ENCODE measurements at regions of chr15 and their contacts with region 1.

Region 1: GRCh38 chr15:70892002-70892914 is at the starts of genes LRRC49 and THAP10:
- DNase-seq: peak; percentile 90
- H3K4me3 Mint-ChIP-seq: peak within 1 kb of the TSS; percentile 87
- H3K27ac Mint-ChIP-seq: peak within 1 kb of the TSS; percentile 53
- H3K4me1 Mint-ChIP-seq: peaks cover 17% of the 10 kb centered on the region
- H3K27me3 Mint-ChIP-seq: no peaks in the 10 kb centered on the region
- CTCF ChIP-seq: no peak
- total RNA-seq, gene LRRC49: 6.9 and 8.4 TPM in 2 replicates
- total RNA-seq, gene THAP10: 4.0 and 5.7 TPM in 2 replicates

Region 2: DNA sequence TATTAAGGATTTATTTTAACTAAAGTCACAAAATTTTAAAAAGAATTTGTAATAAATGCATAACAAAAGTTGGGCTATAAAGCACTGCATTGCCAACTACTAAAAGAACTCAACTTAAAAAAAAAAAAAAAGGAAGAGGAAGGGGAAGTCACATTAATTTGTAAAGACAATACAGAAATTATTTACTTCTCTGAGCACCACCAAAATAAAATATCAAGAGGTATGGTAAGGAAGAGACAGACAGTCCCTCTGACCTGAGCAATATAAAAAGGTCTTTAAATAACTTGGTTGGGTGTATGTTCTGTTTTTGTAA is 212.4 kb before region 1 on chr15:
- CTCF ChIA-PET with region 1: no interaction called
- POLR2A ChIA-PET with region 1: no interaction called
- intact Hi-C with region 1: loop called (anchors 2 kb)
- DNase-seq: no peak
- H3K4me3 Mint-ChIP-seq: no peak overlapping the region
- H3K27ac Mint-ChIP-seq: peak overlapping the region; percentile 58
- H3K4me1 Mint-ChIP-seq: no peaks in the 10 kb centered on the region
- H3K27me3 Mint-ChIP-seq: no peaks in the 10 kb centered on the region
- CTCF ChIP-seq: no peak

Region 3: DNA sequence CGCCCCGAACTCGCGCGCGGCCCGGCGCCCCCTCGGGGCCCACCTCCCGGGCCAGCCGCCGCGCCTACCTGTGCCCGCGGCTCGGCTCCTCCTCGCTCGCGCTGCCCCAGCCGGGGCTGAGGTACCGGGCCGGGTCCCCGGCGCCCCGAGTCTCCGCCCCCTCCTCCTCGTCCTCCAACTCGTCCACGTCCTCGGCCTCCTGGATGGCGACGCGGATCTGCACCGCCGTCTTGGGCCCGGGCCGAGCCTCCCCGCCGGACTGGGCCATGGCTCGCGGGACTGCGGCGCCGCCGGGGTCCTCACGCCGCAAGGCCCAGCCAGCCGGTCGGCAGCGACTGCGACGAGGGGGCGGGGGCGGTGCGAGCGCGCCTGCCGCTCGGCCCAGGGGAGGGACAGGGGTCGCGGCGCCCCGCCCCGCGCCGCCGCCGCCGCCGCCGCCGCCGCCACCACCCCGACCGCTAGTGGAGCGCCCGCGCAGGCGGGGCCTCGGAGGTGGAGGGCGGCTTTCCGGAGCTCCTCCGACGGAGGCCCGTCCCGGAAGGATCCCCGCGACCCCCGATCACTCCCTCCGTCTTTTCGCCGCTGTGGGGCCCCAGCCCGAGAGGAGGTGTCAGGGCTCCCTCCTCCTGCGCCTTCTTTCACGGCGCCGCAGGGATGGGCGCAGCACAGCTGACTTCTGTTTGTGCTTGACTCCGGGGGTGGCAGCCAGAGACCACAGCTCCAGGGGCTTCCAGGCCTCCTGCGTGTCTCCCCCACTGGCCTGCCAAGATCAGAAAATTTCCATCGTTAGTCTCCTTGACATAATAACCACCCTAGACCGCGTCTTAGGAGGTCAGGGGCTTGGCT is 38.2 kb before region 1 on chr15 and contains the start of gene LARP6:
- CTCF ChIA-PET with region 1: no interaction called
- POLR2A ChIA-PET with region 1: interaction called, 4 read pairs
- intact Hi-C with region 1: loop called (anchors 2 kb)
- DNase-seq: peak; percentile 21
- H3K4me3 Mint-ChIP-seq: peak within 1 kb of the TSS; percentile 83
- H3K27ac Mint-ChIP-seq: peak within 1 kb of the TSS; percentile 91
- H3K4me1 Mint-ChIP-seq: peaks cover 35% of the 10 kb centered on the region
- H3K27me3 Mint-ChIP-seq: no peaks in the 10 kb centered on the region
- CTCF ChIP-seq: no peak
- total RNA-seq, gene LARP6: 67.3 and 77.5 TPM in 2 replicates

Region 4: GRCh38 chr15:70936326-70936725 is 44.1 kb after region 1 on chr15:
- CTCF ChIA-PET with region 1: no interaction called
- POLR2A ChIA-PET with region 1: no interaction called
- intact Hi-C with region 1: no loop called
- DNase-seq: no peak
- H3K4me3 Mint-ChIP-seq: no peak overlapping the region
- H3K27ac Mint-ChIP-seq: no peak overlapping the region
- H3K4me1 Mint-ChIP-seq: no peaks in the 10 kb centered on the region
- H3K27me3 Mint-ChIP-seq: no peaks in the 10 kb centered on the region
- CTCF ChIP-seq: no peak

Region 5: DNA sequence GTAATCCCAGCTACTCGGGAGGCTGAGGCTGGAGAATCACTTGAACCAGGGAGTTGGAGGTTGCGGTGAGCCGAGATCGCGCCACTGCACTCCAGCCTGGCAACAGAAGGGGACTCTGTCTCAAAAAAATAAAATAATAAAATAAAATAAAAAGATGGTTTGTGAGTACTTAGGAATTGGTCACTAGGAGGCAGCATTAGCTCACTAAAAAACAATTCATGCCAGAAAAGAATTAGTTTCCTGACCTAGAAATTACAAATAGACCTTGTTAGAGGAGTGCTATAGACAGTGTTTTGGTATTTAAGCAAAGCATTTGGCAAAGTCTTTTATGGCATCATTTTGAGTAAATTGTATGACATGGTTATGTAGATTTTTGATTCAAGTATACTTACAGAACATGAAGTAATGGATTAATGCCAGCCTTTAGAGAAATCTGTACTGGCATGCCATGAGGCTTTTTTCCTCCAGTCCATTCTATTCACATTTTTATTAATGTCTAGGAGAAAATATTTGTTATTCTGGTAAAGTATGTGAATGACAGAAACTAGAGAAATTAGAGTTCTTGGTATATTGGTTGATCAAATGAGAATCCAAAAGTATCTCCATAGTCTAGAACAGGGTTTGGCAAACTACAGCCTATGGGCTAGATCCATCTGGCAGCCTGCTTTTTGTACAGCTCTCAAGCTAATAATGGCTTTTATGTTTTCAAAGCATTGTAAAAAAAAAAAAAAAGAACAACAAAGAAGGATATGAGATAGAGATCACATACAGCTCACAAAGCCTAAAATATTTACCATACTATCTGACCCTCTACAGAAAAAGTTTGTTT is 82.0 kb after region 1 on chr15:
- CTCF ChIA-PET with region 1: no interaction called
- POLR2A ChIA-PET with region 1: no interaction called
- intact Hi-C with region 1: loop called (anchors 1 kb)
- DNase-seq: peak; percentile 52
- H3K4me3 Mint-ChIP-seq: no peak overlapping the region
- H3K27ac Mint-ChIP-seq: no peak overlapping the region
- H3K4me1 Mint-ChIP-seq: no peaks in the 10 kb centered on the region
- H3K27me3 Mint-ChIP-seq: no peaks in the 10 kb centered on the region
- CTCF ChIP-seq: peak; percentile 43

Region 6: GRCh38 chr15:71103102-71103676 is 210.9 kb after region 1 on chr15:
- CTCF ChIA-PET with region 1: no interaction called
- POLR2A ChIA-PET with region 1: no interaction called
- intact Hi-C with region 1: loop called (anchors 10 kb)
- DNase-seq: peak; percentile 64
- H3K4me3 Mint-ChIP-seq: no peak overlapping the region
- H3K27ac Mint-ChIP-seq: peak overlapping the region; percentile 9
- H3K4me1 Mint-ChIP-seq: peaks cover 6% of the 10 kb centered on the region
- H3K27me3 Mint-ChIP-seq: no peaks in the 10 kb centered on the region
- CTCF ChIP-seq: peak; percentile 37

Region 7: GRCh38 chr15:71278989-71279756 is 386.9 kb after region 1 on chr15:
- CTCF ChIA-PET with region 1: no interaction called
- POLR2A ChIA-PET with region 1: no interaction called
- intact Hi-C with region 1: no loop called
- DNase-seq: peak; percentile 97
- H3K4me3 Mint-ChIP-seq: peak overlapping the region; percentile 47
- H3K27ac Mint-ChIP-seq: peak overlapping the region; percentile 87
- H3K4me1 Mint-ChIP-seq: peaks cover 60% of the 10 kb centered on the region
- H3K27me3 Mint-ChIP-seq: no peaks in the 10 kb centered on the region
- CTCF ChIP-seq: no peak

Measured in MCF 10A (cell line).